ENCODE measurements at regions of chr15 and their contacts with region 1.

Region 1: DNA sequence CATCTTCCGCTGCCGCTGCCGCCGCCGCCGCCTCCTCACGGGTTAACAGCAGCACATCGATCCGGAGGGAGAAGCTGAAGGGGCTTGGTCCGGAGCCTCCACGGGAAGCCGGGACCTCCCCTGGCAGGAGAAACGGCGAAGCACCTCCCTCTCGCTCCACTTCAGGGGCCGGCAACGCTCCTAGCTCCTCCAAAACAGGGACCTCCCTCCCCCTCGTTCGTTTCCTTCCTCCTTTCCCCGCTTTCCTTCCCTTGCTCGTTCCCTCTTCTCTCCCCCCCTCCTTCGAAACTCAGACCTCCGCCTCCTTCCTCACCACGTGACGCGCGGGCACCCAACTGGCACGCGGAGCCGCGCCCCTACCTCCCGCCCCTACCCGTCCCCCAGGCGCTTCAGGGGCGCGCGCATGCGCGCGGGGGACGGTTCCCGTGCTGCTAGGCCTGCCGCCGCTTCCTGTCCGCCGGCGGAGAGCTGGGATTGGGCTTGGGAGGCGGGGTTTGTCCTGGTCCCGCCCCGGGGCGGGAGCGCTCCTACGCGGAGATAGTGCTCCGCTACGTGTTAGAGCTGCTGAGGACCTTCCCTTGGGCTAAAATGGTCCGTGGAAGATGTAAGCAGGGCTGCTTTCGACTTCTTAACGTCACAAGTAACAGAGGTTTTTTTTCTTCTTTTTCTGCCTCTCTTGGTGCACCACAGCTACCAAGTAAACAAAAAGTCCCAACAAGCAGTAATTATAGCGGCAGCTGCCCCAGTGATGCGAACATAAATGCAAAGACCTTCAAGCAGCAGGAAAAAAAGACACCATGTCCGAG is at the start of gene ADAM10:
- DNase-seq: peak; percentile 95 to 100 (median 99)

Region 2: DNA sequence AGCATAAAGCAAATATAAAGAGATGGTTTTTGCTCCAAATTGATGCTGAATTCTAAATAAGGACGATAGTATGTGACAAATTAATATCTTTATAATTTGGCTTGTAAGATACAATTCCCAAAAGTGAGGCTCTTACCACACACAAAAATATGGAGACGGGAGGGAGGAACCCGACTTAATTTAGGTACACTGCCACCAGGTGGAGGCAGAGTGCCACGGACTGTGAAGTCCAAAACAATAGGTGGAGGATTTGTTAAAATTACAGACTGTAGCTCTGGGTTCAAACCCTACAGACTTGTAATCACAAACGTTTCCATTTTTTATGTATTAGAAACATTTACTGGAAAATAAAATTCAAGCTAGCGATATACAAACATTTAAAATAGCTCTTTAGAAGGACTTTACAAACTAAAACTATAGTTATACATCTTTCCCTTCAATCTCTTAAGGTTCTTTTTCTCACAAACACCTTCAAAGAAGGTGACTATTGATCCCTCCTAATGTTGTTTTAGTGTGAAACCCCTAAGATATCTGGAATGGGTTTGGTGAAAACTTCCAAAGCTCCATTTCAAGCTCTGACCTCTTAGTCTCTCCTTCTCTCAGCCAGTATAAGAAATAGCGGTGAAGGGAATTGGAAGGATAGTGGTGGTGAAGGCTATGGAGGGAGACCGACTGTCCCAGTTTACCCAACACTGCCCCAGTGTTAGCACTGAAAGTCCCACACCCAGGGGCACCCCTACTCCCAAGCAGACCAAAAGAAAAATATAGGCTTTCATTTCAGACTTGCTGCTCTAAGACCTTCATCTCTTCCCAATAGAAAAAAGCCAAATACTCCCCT is 521.8 kb before region 1 on chr15:
- intact Hi-C with region 1: loop called (anchors 10 kb)
- DNase-seq: peak; percentile 59 to 95 (median 84)

Region 3: DNA sequence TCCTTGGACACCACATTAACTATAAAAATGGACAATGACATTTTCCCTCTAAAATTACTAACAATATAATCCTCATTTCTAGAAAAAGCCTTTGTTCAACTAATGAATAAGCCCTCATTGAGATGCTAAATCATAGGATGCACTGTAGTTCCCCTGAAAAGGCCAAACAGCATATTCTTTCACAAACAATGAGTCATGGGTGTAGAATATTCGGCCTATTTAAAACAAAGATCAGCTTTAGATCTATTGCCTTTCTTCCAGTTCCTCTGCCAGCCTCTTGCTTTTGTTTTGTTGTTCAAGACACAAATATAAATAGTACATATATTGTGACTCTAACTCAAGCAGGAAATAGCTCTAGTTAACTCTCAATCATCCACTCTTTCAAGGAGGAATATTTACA is 82.8 kb before region 1 on chr15:
- intact Hi-C with region 1: loop called (anchors 1 kb)
- DNase-seq: peak in 9 of 42 donors; percentile 19 to 65 (median 47)

Region 4: DNA sequence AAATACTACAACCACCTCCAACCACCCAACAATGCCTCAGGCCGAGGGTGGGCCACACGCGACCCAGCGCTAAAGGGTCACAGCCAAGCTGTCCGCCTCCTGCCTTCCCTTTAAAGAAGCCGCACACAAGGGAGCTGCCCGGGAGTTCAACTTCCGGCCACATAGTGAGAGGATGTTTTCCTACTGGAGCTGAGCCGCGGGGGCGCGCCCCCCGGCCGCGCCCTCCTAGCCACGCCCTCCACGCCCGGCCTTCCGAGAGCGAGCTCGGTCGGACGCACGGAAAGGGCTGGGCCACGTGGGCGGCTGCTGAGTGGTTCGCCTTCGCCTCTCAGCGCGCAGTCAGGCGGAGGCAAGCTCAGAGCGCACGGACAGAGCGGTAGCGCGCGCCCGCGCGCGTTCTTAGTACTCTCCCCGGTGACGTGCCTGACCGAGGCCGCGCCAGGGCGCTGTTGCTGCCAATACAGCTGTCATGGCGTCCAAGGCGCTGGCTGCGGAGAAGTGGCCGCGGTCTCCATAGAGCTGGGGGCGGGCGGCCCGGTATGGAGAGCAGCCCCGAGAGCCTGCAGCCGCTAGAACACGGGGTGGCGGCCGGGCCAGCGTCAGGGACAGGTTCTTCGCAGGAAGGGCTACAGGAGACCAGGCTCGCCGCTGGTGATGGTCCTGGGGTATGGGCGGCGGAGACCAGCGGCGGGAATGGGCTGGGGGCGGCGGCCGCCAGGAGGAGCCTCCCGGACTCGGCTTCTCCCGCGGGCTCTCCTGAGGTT is 21.3 kb after region 1 on chr15 and contains the start of gene MINDY2:
- intact Hi-C with region 1: loop called (anchors 1 kb)
- DNase-seq: peak; percentile 95 to 99 (median 98)

Region 5: DNA sequence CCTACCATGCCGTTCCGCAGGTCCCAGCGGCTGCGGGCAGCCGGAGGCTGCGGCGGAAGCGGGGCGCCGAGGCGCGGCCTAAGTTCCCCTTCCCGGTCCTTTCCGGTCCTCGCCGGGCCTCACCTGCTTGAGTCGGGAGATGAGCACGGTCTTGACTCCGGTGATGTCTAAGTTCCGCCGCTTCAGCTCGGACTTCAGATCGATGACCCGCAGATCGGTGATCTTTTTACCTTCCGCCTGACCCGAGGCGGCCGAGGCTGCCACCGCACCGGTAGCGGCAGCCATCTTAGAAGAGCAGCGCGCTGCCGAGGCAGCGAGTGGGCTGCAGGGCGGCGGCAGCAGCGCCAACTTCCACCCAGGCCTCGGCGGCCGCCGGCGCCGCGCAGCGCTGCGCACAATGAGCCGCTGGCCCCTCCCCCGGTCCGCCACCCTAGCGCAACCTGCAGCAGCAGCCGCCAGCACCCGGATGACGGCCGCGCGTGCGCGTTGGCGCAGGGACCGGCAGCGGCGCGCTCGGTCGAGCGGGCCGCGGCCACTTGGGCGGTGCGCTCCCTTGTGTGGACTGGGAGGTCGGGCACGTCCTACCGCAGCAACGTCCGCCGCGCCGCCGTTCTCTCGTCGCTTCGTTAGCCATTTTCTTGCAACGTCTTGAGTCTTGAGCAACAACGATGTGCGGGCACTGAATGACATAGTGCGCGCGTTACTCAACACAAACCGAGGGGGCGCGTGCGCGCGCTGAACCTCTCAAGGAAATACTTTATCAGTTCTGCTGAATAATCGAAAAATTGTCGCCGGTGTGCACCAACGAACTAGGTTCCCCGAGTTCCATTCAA is 183.8 kb after region 1 on chr15 and contains the start of gene SLTM:
- intact Hi-C with region 1: no loop called
- DNase-seq: peak; percentile 76 to 96 (median 92)